ENCODE measurements at regions of chr1 and their contacts with region 1.

Region 1: GRCh38 chr1:52002038-52002917 is 11.8 kb upstream of the RAB3B start:
- DNase-seq: no peak
- ATAC-seq: peak; percentile 88 to 91
- H3K4me3 ChIP-seq: no peak overlapping the region
- H3K27ac ChIP-seq: no peak overlapping the region
- H3K4me1 ChIP-seq: no peaks in the 10 kb centered on the region
- H3K27me3 ChIP-seq: no peaks in the 10 kb centered on the region

Region 2: DNA sequence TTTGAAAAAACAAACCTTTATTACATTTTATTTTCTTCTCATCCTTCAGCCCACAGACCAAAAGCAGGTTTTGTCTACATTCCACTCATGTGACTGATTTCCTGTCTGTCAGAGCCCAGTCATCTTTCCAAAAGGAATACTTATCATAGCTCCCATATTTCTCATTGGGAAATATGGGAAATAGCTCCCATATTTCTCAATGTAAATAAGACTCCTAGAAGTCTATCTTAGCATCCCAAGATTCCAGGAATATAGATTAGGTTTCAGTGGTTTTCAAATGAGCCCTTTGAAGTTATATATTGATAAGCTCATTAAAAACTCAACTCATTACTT is 104.6 kb before region 1 on chr1:
- intact Hi-C with region 1: loop called in 3 of 4 experiments (anchors 2 to 5 kb)
- DNase-seq: no peak
- ATAC-seq: no peak
- H3K4me3 ChIP-seq: no peak overlapping the region
- H3K27ac ChIP-seq: no peak overlapping the region
- H3K4me1 ChIP-seq: no peaks in the 10 kb centered on the region
- H3K27me3 ChIP-seq: no peaks in the 10 kb centered on the region

Measured in right cardiac atrium (tissue), 5 donors.